Activated CD4-positive, alpha-beta memory T cell treated with anti-CD3 and anti-CD28 coated beads, Interleukin-2, amount 10 ng/mL, durations not matched to agents 7 days and 5 days (primary cell): ENCODE measurements at regions of chr5 and their contacts with region 1.

Region 1: GRCh38 chr5:38453506-38453905 is 102.9 kb downstream of the LIFR start:
- DNase-seq: peak; percentile 73
- H3K4me3 Mint-ChIP-seq: no peak overlapping the region
- H3K27ac Mint-ChIP-seq: peak overlapping the region; percentile 58
- H3K4me1 Mint-ChIP-seq: peaks cover 25% of the 10 kb centered on the region
- H3K27me3 Mint-ChIP-seq: peaks cover 86% of the 10 kb centered on the region

Region 2: GRCh38 chr5:38483788-38484398 is 30.4 kb after region 1 on chr5:
- CTCF ChIA-PET with region 1: no interaction called
- POLR2A ChIA-PET with region 1: no interaction called
- DNase-seq: no peak
- H3K4me3 Mint-ChIP-seq: no peak overlapping the region
- H3K27ac Mint-ChIP-seq: no peak overlapping the region
- H3K4me1 Mint-ChIP-seq: no peaks in the 10 kb centered on the region
- H3K27me3 Mint-ChIP-seq: peaks cover 39% of the 10 kb centered on the region

Region 3: GRCh38 chr5:38809388-38810359 is 356.2 kb after region 1 on chr5:
- CTCF ChIA-PET with region 1: interaction called, 19 read pairs
- POLR2A ChIA-PET with region 1: no interaction called
- DNase-seq: peak; percentile 67
- H3K4me3 Mint-ChIP-seq: no peak overlapping the region
- H3K27ac Mint-ChIP-seq: no peak overlapping the region
- H3K4me1 Mint-ChIP-seq: peaks cover 15% of the 10 kb centered on the region
- H3K27me3 Mint-ChIP-seq: peaks cover 13% of the 10 kb centered on the region